ENCODE measurements at regions of chr14 and their contacts with region 1.

Region 1: DNA sequence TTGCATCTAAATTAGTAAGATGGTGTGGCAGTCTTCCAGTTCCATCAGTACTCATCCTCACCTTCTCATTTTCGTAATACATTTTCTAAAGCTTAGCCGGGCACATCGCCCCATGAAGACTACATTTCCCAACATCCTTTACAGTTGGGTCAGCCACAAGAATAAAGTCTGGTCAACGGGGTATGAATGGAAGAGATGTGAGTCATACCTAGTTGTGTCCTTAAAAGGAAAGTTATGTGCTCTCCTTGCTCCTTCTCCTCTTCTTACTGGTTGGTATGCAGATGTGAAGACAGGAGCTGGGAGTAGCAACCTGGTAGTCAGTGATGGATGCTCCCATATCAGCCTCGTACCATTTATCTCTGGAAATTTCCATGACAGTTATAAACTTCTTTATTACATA is 35.9 kb upstream of the EGLN3 start:
- DNase-seq: no peak
- ATAC-seq: no peak
- H3K4me3 ChIP-seq: no peak overlapping the region
- H3K27ac ChIP-seq: no peak overlapping the region
- H3K4me1 ChIP-seq: peaks cover 0 to 2% of the 10 kb centered on the region in 2 donors
- H3K27me3 ChIP-seq: no peaks in the 10 kb centered on the region

Region 2: DNA sequence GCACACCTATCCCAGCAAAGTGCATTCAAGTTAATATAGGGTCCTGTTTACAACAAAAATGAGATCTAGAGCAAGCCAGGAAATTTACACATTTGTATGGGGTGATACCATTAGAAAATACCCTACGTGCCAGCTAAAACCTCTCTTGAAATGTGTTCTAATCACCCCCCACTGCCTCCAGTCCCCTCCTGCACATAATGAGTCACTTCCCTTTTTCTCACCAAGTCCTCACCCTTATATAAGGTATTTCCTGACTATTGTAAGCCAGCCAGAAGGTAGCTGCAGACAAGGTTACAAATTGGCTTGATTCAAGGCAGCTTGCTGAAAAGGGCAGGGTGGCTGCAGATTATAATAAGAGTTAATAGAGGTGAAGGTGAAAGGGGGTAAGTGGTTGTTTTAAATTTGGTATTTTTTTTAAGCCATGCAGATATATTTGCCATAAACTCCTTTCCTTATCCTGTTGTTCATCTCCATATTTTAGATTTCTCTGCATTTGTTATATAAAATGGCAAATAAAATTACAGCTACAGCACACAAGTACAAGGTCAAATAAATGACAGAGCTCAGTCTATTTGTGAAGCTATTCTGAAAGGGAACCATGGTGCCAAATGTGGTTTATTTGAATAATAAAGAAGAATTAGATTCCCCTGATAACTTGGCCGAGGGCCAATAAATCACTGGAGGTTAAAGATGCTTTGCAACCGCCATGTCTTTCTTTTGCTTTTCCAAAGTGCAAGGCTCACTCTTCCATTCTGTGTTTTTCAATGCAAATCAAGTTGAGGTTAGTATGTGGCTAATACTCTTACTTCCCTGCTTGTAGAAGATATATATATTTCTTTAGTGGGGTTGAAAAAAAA is 421.8 kb before region 1 on chr14:
- intact Hi-C with region 1: no loop called
- DNase-seq: no peak
- ATAC-seq: peak; percentile 57
- H3K4me3 ChIP-seq: no peak overlapping the region
- H3K27ac ChIP-seq: no peak overlapping the region
- H3K4me1 ChIP-seq: no peaks in the 10 kb centered on the region
- H3K27me3 ChIP-seq: no peaks in the 10 kb centered on the region

Region 3: GRCh38 chr14:33799705-33800570 is 186.9 kb before region 1 on chr14:
- intact Hi-C with region 1: no loop called
- DNase-seq: peak in 1 of 2 donors; percentile 49
- ATAC-seq: peak; percentile 33
- H3K4me3 ChIP-seq: peak overlapping the region in 1 of 2 donors; percentile 2
- H3K27ac ChIP-seq: no peak overlapping the region
- H3K4me1 ChIP-seq: no peaks in the 10 kb centered on the region
- H3K27me3 ChIP-seq: no peaks in the 10 kb centered on the region

Region 4: GRCh38 chr14:33950320-33951182 is 36.3 kb before region 1 on chr14 and contains the start of gene EGLN3:
- intact Hi-C with region 1: no loop called
- DNase-seq: peak; percentile 92 to 97
- ATAC-seq: peak; percentile 98
- H3K4me3 ChIP-seq: peak within 1 kb of the TSS; percentile 23 to 82
- H3K27ac ChIP-seq: peak within 1 kb of the TSS in 1 of 2 donors; percentile 15
- H3K4me1 ChIP-seq: no peaks in the 10 kb centered on the region
- H3K27me3 ChIP-seq: no peaks in the 10 kb centered on the region
- total RNA-seq, gene EGLN3: 23.9 to 46.7 TPM

Region 5: GRCh38 chr14:33972583-33973081 is 14.2 kb before region 1 on chr14:
- intact Hi-C with region 1: no loop called
- DNase-seq: no peak
- ATAC-seq: no peak
- H3K4me3 ChIP-seq: no peak overlapping the region
- H3K27ac ChIP-seq: no peak overlapping the region
- H3K4me1 ChIP-seq: no peaks in the 10 kb centered on the region
- H3K27me3 ChIP-seq: no peaks in the 10 kb centered on the region

Region 6: GRCh38 chr14:34059855-34060638 is 73.2 kb after region 1 on chr14:
- intact Hi-C with region 1: loop called (anchors 5 kb)
- DNase-seq: peak; percentile 87 to 95
- ATAC-seq: peak; percentile 95
- H3K4me3 ChIP-seq: peak overlapping the region; percentile 11 to 38
- H3K27ac ChIP-seq: peak overlapping the region in 1 of 2 donors; percentile 77
- H3K4me1 ChIP-seq: no peaks in the 10 kb centered on the region
- H3K27me3 ChIP-seq: no peaks in the 10 kb centered on the region